IMR-90 (cell line): ENCODE measurements at regions of chr5 and their contacts with region 1.

Region 1: GRCh38 chr5:54761213-54761701 is 224.1 kb downstream of the ESM1 start:
- DNase-seq: peak; percentile 95
- ATAC-seq: peak; percentile 78
- H3K4me3 ChIP-seq: no peak overlapping the region
- H3K27ac ChIP-seq: peak overlapping the region; percentile 68; the same call in 1 of the 2 replicates
- H3K4me1 ChIP-seq: peaks cover 27% of the 10 kb centered on the region
- H3K27me3 ChIP-seq: no peaks in the 10 kb centered on the region
- CTCF ChIP-seq: no peak
- POLR2A ChIP-seq: no peak
- RAD21 ChIP-seq: no peak; the same call in 1 of the 2 replicates

Region 2: GRCh38 chr5:54610197-54610944 is 150.9 kb before region 1 on chr5:
- CTCF ChIA-PET with region 1: no interaction called
- POLR2A ChIA-PET with region 1: no interaction called
- dilution Hi-C with region 1: no loop called
- in situ Hi-C with region 1: no loop called
- intact Hi-C with region 1: no loop called
- DNase-seq: no peak
- ATAC-seq: peak; percentile 45
- H3K4me3 ChIP-seq: no peak overlapping the region
- H3K27ac ChIP-seq: no peak overlapping the region
- H3K4me1 ChIP-seq: peaks cover 16% of the 10 kb centered on the region
- H3K27me3 ChIP-seq: no peaks in the 10 kb centered on the region
- CTCF ChIP-seq: no peak
- POLR2A ChIP-seq: no peak
- RAD21 ChIP-seq: no peak

Region 3: DNA sequence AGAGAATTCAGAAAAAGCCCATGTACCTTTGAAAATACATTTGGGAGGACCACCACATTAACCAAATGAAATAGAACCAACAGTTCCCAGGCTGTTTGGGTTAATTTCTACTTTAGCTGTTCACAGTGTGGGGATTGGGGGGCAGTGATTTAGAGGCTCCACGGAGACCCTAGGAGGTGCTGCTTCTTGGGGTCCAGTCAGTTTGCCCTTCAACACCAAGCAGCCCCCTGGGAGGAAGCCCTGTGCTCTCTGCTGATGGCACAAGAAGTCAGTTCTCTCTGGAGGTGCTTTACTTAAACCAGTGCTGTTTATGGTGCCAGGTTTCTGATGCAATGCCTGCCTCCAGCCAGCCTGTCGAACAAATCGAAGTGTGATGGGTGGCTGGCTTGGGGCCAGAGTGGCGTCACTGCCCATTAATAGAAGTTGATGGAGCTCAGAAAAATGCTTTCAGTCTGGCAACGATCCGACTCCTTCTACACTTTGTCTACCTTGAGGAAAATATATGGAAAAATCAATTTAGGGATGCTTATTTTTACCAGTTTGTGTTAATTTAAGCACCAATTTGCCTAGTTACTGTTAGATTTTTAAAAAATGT is 109.7 kb before region 1 on chr5:
- CTCF ChIA-PET with region 1: no interaction called
- POLR2A ChIA-PET with region 1: no interaction called
- dilution Hi-C with region 1: no loop called
- in situ Hi-C with region 1: no loop called
- intact Hi-C with region 1: no loop called
- DNase-seq: peak; percentile 41
- ATAC-seq: no peak
- H3K4me3 ChIP-seq: no peak overlapping the region
- H3K27ac ChIP-seq: no peak overlapping the region
- H3K4me1 ChIP-seq: peaks cover 19% of the 10 kb centered on the region
- H3K27me3 ChIP-seq: no peaks in the 10 kb centered on the region
- CTCF ChIP-seq: no peak
- POLR2A ChIP-seq: no peak
- RAD21 ChIP-seq: no peak

Region 4: DNA sequence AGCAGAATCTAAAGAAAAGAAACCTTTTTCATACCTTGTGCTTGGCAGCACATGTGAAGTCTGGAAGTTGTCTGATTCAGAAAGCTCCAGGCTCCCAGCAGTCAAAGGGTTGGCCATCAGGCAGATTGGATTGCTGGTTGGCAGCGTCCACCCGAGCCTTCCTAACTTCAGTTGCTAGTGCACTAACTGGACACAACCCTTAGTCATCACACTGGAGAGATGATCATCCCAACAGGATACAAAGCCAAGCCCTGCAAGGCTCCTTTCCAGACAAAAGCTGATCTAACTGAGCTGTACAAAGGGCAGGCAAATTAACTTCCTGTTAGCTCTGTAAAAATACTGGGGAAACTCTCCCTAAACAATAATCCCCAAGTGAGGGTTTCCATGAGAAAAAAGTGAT is 58.1 kb before region 1 on chr5:
- CTCF ChIA-PET with region 1: no interaction called
- POLR2A ChIA-PET with region 1: no interaction called
- dilution Hi-C with region 1: no loop called
- in situ Hi-C with region 1: no loop called
- intact Hi-C with region 1: loop called (anchors 5 kb)
- DNase-seq: peak; percentile 93
- ATAC-seq: peak; percentile 66
- H3K4me3 ChIP-seq: peak overlapping the region; percentile 11; the same call in 1 of the 2 replicates
- H3K27ac ChIP-seq: peak overlapping the region; percentile 87; the same call in 1 of the 2 replicates
- H3K4me1 ChIP-seq: peaks cover 27% of the 10 kb centered on the region
- H3K27me3 ChIP-seq: no peaks in the 10 kb centered on the region
- CTCF ChIP-seq: no peak
- POLR2A ChIP-seq: no peak
- RAD21 ChIP-seq: peak; percentile 30

Region 5: DNA sequence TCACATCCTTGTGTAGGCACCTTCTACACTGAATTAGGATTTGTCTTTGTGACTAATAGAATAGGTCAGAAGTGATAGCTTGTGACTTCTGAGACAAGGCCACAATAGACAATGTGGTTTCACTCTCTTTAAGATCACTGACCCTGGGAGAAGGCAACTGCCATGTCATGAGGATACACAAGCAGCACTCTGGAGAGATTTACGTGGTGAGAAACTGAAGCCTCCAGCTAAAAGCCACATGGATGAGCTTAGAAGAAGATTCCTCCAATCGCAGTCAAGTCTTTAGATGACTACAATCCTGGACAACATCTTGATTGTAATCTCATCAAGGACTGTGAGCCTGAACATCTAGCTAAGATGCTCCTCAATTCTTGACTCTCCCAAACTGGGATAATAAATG is 17.5 kb after region 1 on chr5:
- CTCF ChIA-PET with region 1: no interaction called
- POLR2A ChIA-PET with region 1: no interaction called
- dilution Hi-C with region 1: no loop called
- in situ Hi-C with region 1: no loop called
- intact Hi-C with region 1: no loop called
- DNase-seq: no peak
- ATAC-seq: no peak
- H3K4me3 ChIP-seq: no peak overlapping the region
- H3K27ac ChIP-seq: no peak overlapping the region
- H3K4me1 ChIP-seq: peaks cover 1% of the 10 kb centered on the region; the same call in 1 of the 2 replicates
- H3K27me3 ChIP-seq: no peaks in the 10 kb centered on the region
- CTCF ChIP-seq: no peak
- POLR2A ChIP-seq: no peak
- RAD21 ChIP-seq: no peak

Region 6: GRCh38 chr5:54799645-54800044 is 38.4 kb after region 1 on chr5:
- CTCF ChIA-PET with region 1: no interaction called
- POLR2A ChIA-PET with region 1: no interaction called
- dilution Hi-C with region 1: no loop called
- in situ Hi-C with region 1: no loop called
- intact Hi-C with region 1: loop called (anchors 5 kb)
- DNase-seq: no peak
- ATAC-seq: no peak
- H3K4me3 ChIP-seq: no peak overlapping the region
- H3K27ac ChIP-seq: no peak overlapping the region
- H3K4me1 ChIP-seq: peaks cover 6% of the 10 kb centered on the region
- H3K27me3 ChIP-seq: no peaks in the 10 kb centered on the region
- CTCF ChIP-seq: no peak
- POLR2A ChIP-seq: no peak
- RAD21 ChIP-seq: no peak